RWPE1 (cell line): ENCODE measurements at regions of chr12 and their contacts with region 1.

Region 1: GRCh38 chr12:101839324-101840283 is 8.8 kb upstream of the GNPTAB start:
- DNase-seq: peak; percentile 63
- H3K27ac ChIP-seq: no peak overlapping the region
- CTCF ChIP-seq: peak; percentile 90

Region 2: DNA sequence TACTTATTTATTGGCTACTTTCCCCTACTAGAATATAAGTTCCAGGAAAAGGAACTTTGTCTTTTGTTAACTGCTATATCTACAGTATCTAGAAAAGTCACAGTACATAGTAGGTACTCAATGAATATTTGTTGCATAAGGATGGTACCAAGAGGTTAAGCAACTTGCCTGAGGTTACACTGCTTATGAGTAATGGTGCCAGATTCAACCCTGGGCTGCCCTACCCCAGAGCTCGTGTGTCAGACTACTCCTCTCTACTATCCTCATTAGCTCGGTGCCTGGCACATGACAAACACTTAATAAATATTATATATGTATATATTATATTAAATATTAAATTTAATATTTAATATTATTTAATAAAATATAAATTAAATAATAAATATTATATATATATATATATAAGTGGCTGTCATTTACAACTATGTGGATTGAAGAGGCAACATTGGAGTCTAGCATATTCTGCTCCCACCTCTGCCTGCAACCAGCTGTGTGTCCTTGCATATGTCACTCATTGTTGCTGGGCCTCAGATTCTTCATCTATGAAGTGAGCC is 534.3 kb before region 1 on chr12:
- CTCF ChIA-PET with region 1: no interaction called
- POLR2A ChIA-PET with region 1: no interaction called
- DNase-seq: peak; percentile 8
- H3K27ac ChIP-seq: no peak overlapping the region
- CTCF ChIP-seq: no peak

Region 3: DNA sequence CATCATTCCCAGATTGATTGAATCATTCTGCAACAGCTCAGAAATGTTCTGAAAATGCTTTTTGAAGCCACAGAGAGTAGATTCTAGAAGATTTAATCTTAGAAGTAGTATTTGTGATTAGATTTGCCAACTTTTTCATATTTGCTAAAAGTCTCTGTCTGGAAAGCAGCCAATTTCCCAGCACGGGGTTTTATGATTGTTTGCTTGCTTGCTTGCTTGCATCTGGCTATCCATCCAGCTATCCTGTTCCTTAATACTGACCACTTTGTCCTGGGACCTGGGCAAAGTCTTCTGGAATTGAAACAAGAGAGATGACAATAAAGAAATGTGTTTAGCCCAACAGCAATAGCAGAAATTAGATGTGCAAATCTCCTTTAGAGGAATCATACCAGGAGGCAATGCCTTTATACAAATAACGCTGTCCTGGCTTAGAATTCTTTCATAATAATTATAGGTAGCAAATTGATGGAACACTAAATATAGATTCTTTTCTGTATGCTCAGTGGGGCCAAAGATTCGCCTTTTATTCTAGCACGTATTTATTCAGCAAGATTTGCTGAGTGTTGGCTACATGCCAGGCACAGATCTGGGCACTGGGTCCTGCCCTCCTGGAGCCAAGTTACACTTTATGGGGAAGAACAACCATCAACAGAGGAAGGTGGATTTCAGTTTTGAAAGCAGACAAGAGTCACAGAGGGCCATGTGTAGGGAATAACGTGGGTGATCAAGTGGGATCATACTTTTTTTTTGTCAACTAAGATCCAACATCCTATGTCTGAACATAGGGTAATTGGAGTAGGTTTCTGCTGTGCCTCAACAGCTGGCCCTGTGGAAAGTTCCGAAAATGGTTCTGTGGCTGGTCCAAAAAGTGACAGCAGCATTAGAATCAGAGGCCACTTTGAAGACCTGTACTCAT is 219.5 kb before region 1 on chr12:
- CTCF ChIA-PET with region 1: no interaction called
- POLR2A ChIA-PET with region 1: no interaction called
- DNase-seq: no peak
- H3K27ac ChIP-seq: no peak overlapping the region
- CTCF ChIP-seq: no peak

Region 4: GRCh38 chr12:101773650-101774162 is 65.9 kb before region 1 on chr12:
- CTCF ChIA-PET with region 1: interaction called, 20 read pairs
- POLR2A ChIA-PET with region 1: no interaction called
- DNase-seq: peak; percentile 64
- H3K27ac ChIP-seq: no peak overlapping the region
- CTCF ChIP-seq: peak; percentile 92

Region 5: GRCh38 chr12:103769240-103769945 is 1929.8 kb after region 1 on chr12:
- CTCF ChIA-PET with region 1: interaction called, 10 read pairs
- POLR2A ChIA-PET with region 1: no interaction called
- DNase-seq: no peak
- H3K27ac ChIP-seq: peak overlapping the region; percentile 18; the same call in 1 of the 2 replicates
- CTCF ChIP-seq: no peak